Dorsolateral prefrontal cortex (tissue), 120 donors: ENCODE measurements at regions of chr13 and their contacts with region 1.

Region 1: DNA sequence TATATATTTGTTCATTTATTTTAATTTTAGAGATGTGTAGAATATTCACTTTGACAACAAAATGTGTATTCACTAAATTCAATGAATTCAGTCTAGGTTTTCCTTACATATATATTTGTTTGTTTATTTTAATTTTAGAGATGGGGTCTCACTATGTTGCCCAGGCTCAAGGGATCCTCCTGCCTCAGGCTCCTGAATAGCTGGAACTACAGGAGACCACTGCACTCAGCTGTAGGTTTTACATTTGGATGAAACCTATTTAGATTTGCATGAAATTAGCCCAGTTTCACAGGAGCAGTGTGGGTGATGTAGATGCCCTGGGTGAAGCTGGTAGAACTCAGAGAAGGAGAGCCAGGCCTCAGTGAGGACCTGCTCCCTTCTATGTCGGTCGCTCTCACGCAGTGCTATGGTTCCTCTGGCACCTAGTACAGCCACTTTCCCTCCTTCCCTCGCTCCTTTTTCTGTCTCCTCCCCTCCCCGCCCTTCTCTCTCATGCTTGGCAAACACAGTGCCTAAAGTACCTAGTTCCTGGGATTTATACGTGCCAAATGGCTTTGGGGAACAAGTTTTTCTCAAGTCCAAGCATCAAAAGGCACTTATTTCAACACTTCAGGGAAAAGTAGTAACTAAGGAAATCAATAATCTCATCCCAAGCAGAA is 14.7 kb upstream of the HMGB1 start:
- DNase-seq: no peak
- H3K4me3 ChIP-seq: no peak overlapping the region
- H3K27ac ChIP-seq: no peak overlapping the region
- H3K27me3 ChIP-seq: no peaks in the 10 kb centered on the region
- CTCF ChIP-seq: no peak

Region 2: GRCh38 chr13:30520571-30520970 is 40.1 kb after region 1 on chr13:
- intact Hi-C with region 1: loop called in 1 of 2 experiments (anchors 5 kb)
- DNase-seq: no peak
- H3K4me3 ChIP-seq: no peak overlapping the region
- H3K27ac ChIP-seq: no peak overlapping the region
- H3K27me3 ChIP-seq: no peaks in the 10 kb centered on the region
- CTCF ChIP-seq: no peak